ENCODE measurements at regions of chr12 and their contacts with region 1.

Region 1: DNA sequence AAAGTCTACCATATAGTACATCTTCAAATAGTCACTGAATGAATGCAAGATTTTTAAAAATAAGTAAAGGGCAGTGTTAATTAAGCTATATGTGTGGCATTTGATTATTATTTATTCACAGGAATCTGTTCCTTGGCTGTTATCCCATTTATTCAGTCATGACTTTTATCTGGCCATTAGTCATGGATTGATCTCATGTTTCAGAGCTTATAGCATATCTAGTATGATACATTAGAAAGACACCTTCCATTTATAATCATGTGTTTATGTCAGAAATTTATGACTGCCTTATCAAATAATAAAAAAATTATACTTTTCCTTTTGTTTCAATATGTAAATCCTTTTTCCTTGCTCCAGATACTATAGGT is 248.0 kb upstream of the PDE3A start:
- DNase-seq: no peak
- ATAC-seq: no peak
- H3K4me3 ChIP-seq: no peak overlapping the region
- H3K27ac ChIP-seq: no peak overlapping the region
- H3K4me1 ChIP-seq: no peaks in the 10 kb centered on the region
- H3K27me3 ChIP-seq: no peaks in the 10 kb centered on the region
- CTCF ChIP-seq: no peak
- EP300 ChIP-seq: no peak
- POLR2A ChIP-seq: no peak
- RAD21 ChIP-seq: no peak

Region 2: GRCh38 chr12:20142956-20143355 is 22.6 kb after region 1 on chr12:
- CTCF ChIA-PET with region 1: interaction called, 7 read pairs
- POLR2A ChIA-PET with region 1: no interaction called
- RAD21 ChIA-PET with region 1: interaction called, 3 read pairs
- SMC1A ChIA-PET with region 1: interaction called, 12 read pairs
- in situ Hi-C with region 1: no loop called
- intact Hi-C with region 1: no loop called
- DNase-seq: no peak
- ATAC-seq: peak; percentile 75
- H3K4me3 ChIP-seq: no peak overlapping the region
- H3K27ac ChIP-seq: no peak overlapping the region
- H3K4me1 ChIP-seq: 0 out of 2 replicates have a peak, but pooled peaks cover 2% of the 10 kb centered on the region
- H3K27me3 ChIP-seq: no peaks in the 10 kb centered on the region
- CTCF ChIP-seq: no peak; a peak in 1 of 6 replicates
- EP300 ChIP-seq: no peak
- POLR2A ChIP-seq: no peak
- RAD21 ChIP-seq: 0 out of 2 replicates have a peak, but pooled peaks have one; percentile 28

Region 3: GRCh38 chr12:20220339-20220738 is 100.0 kb after region 1 on chr12:
- CTCF ChIA-PET with region 1: interaction called, 20 read pairs
- POLR2A ChIA-PET with region 1: no interaction called
- RAD21 ChIA-PET with region 1: interaction called, 7 read pairs
- SMC1A ChIA-PET with region 1: interaction called, 12 read pairs
- in situ Hi-C with region 1: no loop called
- intact Hi-C with region 1: loop called (anchors 2 kb)
- DNase-seq: peak; percentile 5
- ATAC-seq: peak; percentile 87
- H3K4me3 ChIP-seq: no peak overlapping the region
- H3K27ac ChIP-seq: no peak overlapping the region
- H3K4me1 ChIP-seq: no peaks in the 10 kb centered on the region
- H3K27me3 ChIP-seq: no peaks in the 10 kb centered on the region
- CTCF ChIP-seq: peak; percentile 15 to 44 (median 35); a peak in 4 of 6 replicates
- EP300 ChIP-seq: no peak
- POLR2A ChIP-seq: no peak
- RAD21 ChIP-seq: peak; percentile 61

Region 4: DNA sequence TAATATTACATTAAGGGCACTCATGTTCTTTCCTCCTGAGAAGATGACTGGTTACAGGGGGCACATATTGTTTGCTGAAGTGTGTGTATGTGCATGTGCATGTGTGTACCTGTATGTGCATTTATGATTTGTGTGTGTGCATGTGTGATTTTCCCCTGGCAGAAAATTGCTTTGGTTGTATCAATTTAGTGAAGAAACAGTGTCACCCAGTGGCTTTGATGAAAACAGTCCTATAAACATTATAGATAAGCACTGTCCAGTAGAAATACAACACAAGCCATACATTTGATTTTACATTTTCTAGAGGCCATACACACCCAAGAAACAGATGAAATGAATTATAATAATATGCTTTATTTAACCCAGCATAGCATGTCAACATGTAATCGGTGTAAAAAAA is 256.7 kb after region 1 on chr12:
- CTCF ChIA-PET with region 1: no interaction called
- POLR2A ChIA-PET with region 1: no interaction called
- RAD21 ChIA-PET with region 1: interaction called, 5 read pairs
- SMC1A ChIA-PET with region 1: no interaction called
- in situ Hi-C with region 1: no loop called
- intact Hi-C with region 1: loop called (anchors 1 kb)
- DNase-seq: no peak
- ATAC-seq: peak; percentile 44
- H3K4me3 ChIP-seq: no peak overlapping the region
- H3K27ac ChIP-seq: no peak overlapping the region
- H3K4me1 ChIP-seq: no peaks in the 10 kb centered on the region
- H3K27me3 ChIP-seq: no peaks in the 10 kb centered on the region
- CTCF ChIP-seq: peak in 1 of 3 experiments; percentile 36; a peak in 1 of 6 replicates
- EP300 ChIP-seq: no peak
- POLR2A ChIP-seq: no peak
- RAD21 ChIP-seq: peak; percentile 60

Region 5: DNA sequence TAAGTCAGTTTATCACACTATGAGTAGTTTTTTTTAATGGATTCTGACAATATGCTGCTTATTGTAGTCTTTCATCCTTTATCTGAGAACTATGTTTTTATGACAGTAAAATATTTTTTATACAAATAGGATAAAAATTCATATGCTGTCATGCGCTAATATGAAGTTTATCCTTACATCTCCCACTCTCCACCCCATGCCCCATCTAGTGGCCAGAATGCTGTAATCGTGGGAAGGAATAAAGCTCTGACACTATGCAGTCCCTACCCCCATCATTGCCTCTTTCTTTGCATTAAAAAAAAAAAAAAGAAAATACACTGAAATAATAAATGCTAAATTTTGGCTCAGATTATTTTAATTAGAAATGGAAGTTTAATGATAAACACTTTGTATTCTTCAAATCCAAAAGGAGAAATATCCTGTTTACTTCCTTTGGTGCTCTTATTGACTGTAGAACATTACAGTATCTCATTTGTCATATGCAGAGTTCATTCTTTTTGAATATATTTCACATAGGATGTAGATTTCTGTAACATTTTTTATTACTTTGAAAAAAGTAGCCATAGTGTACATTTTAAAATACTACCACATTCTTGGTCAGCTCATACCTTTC is 428.9 kb after region 1 on chr12:
- CTCF ChIA-PET with region 1: no interaction called
- POLR2A ChIA-PET with region 1: no interaction called
- RAD21 ChIA-PET with region 1: interaction called, 3 read pairs
- SMC1A ChIA-PET with region 1: no interaction called
- in situ Hi-C with region 1: no loop called
- intact Hi-C with region 1: loop called (anchors 5 kb)
- DNase-seq: no peak
- ATAC-seq: peak; percentile 51; the same call in 1 of the 3 replicates
- H3K4me3 ChIP-seq: no peak overlapping the region
- H3K27ac ChIP-seq: no peak overlapping the region
- H3K4me1 ChIP-seq: no peaks in the 10 kb centered on the region
- H3K27me3 ChIP-seq: no peaks in the 10 kb centered on the region
- CTCF ChIP-seq: peak in 2 of 3 experiments; percentile 27 to 36; a peak in 2 of 6 replicates
- EP300 ChIP-seq: no peak
- POLR2A ChIP-seq: no peak
- RAD21 ChIP-seq: no peak